ENCODE measurements at regions of chr12 and their contacts with region 1.

Region 1: DNA sequence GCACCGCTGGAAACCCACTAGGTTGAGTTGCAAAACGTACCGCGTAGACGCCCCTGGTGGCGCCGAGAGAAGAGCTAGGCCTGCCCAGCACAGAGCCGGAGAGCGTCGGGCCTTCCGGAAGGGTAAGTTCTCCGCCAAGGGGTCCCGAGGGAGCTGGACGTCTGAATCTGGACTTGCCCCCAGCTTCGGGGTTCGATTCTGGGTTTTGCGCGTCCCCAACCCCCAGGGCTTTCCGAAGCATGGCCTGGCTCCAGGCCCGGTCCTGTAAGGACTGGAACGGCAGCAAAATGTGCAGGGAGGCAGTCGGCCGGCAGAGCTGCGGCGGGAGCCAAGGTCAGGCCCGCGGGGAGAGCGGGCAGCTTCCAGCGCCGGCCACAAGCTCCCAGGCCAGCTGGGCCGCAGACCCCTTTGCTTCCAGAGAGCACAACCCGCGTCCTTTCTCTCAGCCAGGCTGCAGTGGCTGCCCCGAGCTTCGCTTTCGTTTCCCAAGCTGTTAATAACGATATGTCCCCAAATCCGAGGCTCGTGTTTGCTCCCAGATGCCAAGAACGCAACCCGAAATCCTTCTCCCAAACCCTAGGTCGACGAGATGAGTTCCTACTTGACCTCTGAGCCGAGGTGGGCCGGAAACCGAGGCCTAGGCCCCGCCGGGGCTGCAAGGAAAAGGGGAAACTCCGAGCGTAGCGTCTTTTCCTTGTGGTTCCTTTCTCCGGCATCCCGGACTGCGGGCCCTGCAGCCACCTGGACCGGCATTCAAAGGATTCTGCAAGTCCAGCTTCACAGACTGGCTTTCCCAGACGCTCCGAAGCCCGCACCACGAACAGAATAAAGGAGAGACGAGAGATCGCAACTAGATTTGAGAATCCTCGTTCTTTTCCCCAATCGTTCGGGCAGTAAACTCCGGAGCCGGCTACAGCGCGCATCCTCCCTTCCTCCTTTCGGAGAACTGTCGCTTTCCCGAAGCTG is 3.2 kb upstream of the TBX5 start:
- DNase-seq: no peak
- H3K4me3 ChIP-seq: peak overlapping the region; percentile 90
- H3K27me3 ChIP-seq: no peaks in the 10 kb centered on the region
- CTCF ChIP-seq: no peak

Region 2: GRCh38 chr12:114391088-114391487 is 18.1 kb before region 1 on chr12:
- CTCF ChIA-PET with region 1: no interaction called
- POLR2A ChIA-PET with region 1: no interaction called
- DNase-seq: no peak
- H3K4me3 ChIP-seq: no peak overlapping the region
- H3K27me3 ChIP-seq: no peaks in the 10 kb centered on the region
- CTCF ChIP-seq: no peak

Region 3: DNA sequence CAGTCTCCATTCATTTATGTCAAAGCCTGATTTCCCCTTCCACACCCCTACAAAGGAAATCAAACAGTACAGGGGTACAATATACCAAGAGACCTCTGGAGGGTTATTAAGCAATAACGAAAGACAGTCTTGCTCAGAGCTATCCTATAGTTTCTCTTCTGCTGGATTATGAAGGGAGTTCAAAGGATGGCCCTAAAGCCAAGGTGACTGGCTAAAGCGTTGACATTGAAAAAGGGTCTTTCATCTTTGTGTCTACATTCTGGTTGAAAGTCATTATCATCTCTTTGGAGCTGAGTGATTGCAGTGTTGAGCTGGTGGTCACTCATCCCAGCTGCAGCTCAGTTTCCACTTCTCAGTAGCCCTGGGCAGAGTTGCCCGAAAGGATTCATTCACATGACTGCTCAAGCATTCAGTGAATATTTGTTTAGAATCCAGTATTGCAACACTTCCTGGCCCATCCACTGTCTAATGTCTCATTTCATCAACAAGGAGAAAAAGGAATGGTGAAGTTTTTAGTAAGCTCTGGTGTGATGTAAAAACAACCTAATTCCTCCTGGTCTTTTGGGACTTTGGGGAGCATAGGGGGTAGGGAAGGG is 16.0 kb after region 1 on chr12:
- CTCF ChIA-PET with region 1: interaction called, 4 read pairs
- POLR2A ChIA-PET with region 1: interaction called, 11 read pairs
- DNase-seq: peak; percentile 69
- H3K4me3 ChIP-seq: no peak overlapping the region
- H3K27me3 ChIP-seq: no peaks in the 10 kb centered on the region
- CTCF ChIP-seq: no peak

Measured in BJ (cell line).